Ovary (tissue), 10 donors: ENCODE measurements at regions of chr1 and their contacts with region 1.

Region 1: DNA sequence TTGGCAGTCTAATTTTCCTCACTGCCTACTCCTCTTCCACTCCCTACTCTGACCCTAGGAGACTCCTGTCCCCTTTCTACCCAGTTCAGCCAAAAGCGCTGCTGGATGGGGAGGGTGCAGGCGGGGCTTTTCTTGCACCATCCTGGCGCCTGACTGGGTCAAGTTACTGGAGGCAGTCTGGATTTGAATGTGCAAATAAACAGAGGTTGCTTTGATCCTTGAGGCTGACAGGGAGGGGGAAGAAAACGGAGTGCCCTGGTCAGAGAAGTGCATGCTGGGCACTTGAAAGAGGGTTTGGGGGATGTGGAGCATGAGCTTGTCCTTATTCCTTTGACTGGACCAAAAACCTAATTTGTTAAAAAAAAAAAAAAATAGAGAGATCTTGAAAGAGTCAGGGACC is 76.8 kb upstream of the SOX13 start:
- DNase-seq: no peak
- H3K4me3 ChIP-seq: no peak overlapping the region
- H3K27ac ChIP-seq: no peak overlapping the region
- H3K4me1 ChIP-seq: no peaks in the 10 kb centered on the region
- H3K27me3 ChIP-seq: no peaks in the 10 kb centered on the region
- CTCF ChIP-seq: no peak
- EP300 ChIP-seq: no peak
- POLR2A ChIP-seq: no peak

Region 2: DNA sequence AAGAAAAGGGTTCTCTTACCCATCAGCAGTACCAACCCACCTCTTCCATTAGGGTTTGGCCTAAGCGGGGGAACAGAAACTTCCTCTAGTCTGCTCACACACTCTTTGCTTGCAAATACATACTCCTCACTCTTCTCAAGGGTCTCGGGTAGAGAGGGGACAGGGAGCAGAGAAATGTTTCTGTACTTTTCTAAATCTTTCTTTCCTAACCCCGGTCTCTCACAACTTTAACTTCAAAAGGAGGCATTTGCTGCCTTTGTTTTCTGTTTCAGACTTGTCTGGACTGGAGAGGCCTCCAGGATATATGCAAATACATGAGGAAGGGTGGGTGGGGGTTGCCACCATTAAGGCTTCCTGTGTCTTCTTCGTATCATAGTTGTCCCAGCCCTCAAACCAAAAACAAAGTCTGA is 241.7 kb before region 1 on chr1:
- intact Hi-C with region 1: loop called in 1 of 4 experiments (anchors 10 kb)
- DNase-seq: no peak
- H3K4me3 ChIP-seq: no peak overlapping the region
- H3K27ac ChIP-seq: no peak overlapping the region
- H3K4me1 ChIP-seq: no peaks in the 10 kb centered on the region
- H3K27me3 ChIP-seq: no peaks in the 10 kb centered on the region
- CTCF ChIP-seq: no peak
- EP300 ChIP-seq: no peak
- POLR2A ChIP-seq: no peak